BJ (cell line): ENCODE measurements at regions of chr7 and their contacts with region 1.

Region 1: GRCh38 chr7:25894902-25895791 is 256.9 kb upstream of the NFE2L3 start:
- DNase-seq: no peak
- H3K4me3 ChIP-seq: no peak overlapping the region
- H3K27me3 ChIP-seq: peaks cover 6% of the 10 kb centered on the region
- CTCF ChIP-seq: peak; percentile 86

Region 2: DNA sequence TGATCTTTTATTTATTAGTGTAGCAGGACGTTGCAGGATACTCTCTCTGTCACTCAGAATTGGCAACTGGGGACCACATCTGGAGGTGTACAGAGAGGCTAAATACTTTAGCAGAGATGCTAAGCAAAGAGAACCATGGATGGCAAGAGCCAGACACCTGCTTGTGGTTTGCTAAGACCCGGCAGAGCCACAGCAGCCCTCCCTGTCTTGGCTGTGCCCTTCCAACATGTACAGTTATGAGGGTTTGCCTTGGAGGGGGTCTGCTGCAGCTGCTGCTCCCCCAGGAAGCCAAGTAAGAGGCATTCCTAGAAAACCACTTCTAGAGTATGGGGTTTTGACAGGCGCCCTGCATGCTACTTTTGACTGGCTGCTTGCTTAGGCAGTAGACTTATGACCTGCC is 671.9 kb before region 1 on chr7:
- CTCF ChIA-PET with region 1: no interaction called
- POLR2A ChIA-PET with region 1: no interaction called
- DNase-seq: no peak
- H3K4me3 ChIP-seq: no peak overlapping the region
- H3K27me3 ChIP-seq: no peaks in the 10 kb centered on the region; the same call in none of the 2 replicates
- CTCF ChIP-seq: no peak

Region 3: DNA sequence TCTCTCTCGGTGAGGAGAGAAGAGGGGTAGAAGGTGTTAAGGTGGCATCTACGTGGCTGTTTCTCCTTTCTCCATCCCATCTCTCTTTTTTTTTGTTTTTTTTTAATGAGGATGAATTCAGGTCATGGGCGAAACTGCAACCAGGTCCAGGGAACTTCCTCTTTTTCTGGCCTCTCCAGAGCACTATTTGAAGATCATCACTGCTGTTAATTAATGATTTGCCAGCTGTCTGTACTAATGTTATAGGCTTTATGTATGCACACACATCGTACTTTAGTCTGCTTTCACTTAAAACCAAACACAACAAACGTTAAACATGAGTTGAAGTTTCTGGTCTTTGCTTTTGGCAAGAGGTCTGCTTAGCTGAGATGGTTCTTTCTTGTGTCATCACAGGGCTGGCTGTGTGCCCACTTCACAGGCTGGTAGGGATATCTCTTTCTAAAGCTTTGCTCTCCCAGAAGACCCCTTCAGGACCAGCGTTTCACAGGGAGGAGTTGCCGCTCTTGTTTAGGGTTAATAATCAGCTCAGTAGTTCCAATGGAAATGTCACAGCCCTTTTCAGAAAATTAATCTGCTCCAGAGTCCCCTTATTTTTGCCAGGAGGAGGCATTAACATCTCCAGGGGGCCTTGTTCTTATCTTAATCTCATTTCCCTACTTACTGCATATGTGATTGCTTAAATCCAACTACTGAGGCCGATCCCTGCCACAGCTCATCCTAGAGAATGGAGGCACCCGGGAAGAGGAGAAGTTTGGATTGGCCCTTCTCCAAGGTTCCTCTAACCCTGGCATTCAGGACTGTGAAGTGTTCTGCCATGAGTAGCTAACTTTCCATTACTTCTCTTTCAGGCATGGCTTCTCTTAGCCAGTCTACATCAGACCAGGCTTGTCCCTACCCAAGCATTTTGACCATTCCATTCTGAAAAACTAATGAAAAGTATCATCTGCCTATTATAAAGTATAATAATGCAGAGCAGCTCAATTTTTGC is 17.1 kb before region 1 on chr7:
- CTCF ChIA-PET with region 1: interaction called, 13 read pairs
- POLR2A ChIA-PET with region 1: no interaction called
- DNase-seq: no peak
- H3K4me3 ChIP-seq: no peak overlapping the region
- H3K27me3 ChIP-seq: peaks cover 14% of the 10 kb centered on the region
- CTCF ChIP-seq: no peak

Region 4: GRCh38 chr7:25908154-25908949 is 13.2 kb after region 1 on chr7:
- CTCF ChIA-PET with region 1: interaction called, 50 read pairs
- POLR2A ChIA-PET with region 1: no interaction called
- DNase-seq: no peak
- H3K4me3 ChIP-seq: no peak overlapping the region
- H3K27me3 ChIP-seq: no peaks in the 10 kb centered on the region
- CTCF ChIP-seq: no peak

Region 5: DNA sequence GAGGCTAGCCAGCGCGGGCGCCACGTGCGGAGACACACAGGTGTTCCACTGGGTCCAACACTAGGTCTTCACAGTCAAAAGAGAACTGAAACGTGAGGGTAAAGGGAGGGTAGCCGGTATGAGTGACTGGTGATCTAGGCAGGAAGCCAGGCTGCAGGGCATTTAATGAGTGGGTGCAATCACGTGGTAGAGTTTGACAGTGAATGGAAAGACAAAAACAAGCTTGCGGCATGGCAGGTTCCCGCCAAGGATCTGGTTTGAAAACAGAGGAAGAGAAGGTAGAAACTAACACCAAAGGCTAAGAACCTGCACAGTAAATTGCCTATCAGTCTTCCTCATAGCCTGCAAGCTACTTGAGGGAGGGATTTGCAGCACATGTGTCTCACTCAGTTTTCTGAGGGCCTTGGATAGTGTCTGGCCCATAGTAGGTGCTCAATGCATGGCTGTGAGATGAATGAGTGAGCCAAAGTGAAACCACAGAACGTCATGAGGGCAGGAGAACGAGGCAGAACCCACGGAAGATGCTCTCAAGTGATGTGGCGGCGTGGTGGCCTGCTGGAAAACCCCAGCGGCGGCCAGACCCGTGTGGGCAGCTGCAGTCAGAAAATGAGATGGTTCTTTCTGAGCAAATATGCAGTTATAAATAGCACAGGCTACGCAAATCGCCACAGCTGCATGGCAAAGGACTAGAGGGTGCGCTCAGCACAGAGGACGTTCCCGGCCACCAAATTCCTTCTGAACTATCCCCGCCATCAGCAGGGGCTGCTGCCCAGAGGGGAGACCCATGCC is 73.3 kb after region 1 on chr7:
- CTCF ChIA-PET with region 1: no interaction called
- POLR2A ChIA-PET with region 1: no interaction called
- DNase-seq: no peak
- H3K4me3 ChIP-seq: no peak overlapping the region
- H3K27me3 ChIP-seq: no peaks in the 10 kb centered on the region
- CTCF ChIP-seq: no peak

Region 6: GRCh38 chr7:26061688-26062150 is 166.6 kb after region 1 on chr7:
- CTCF ChIA-PET with region 1: interaction called, 23 read pairs
- POLR2A ChIA-PET with region 1: no interaction called
- DNase-seq: no peak
- H3K4me3 ChIP-seq: no peak overlapping the region
- H3K27me3 ChIP-seq: no peaks in the 10 kb centered on the region; the same call in none of the 2 replicates
- CTCF ChIP-seq: peak; percentile 91

Region 7: DNA sequence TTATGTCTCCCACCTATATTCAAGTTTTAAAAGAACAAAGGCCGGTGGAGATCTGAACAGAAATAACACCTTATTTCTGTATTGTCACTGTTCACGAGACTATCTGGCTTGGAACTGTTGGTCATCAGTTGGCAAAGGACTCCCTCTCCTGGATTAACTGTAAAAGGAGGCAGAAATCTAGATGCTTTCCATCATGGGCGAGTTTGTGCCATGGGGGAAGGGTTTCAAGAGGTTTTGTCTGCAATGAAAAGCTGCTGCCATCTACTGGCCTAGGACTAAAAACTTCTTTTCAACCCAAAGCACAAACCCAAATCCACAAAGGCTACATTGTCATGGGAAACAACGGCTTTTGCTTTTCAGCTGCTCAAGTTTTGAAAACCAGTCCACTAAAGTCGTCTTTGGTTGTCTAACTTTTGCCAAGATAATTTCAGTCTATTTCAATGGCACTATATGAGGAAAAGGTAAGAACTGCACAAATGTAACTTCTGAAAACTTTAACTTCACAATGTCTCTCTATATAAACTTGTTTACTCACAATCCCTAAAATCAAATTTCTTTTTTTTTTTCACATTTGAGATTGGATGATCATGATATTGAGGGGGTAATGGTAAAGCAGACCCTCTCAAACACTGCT is 772.5 kb after region 1 on chr7:
- CTCF ChIA-PET with region 1: interaction called, 10 read pairs
- POLR2A ChIA-PET with region 1: no interaction called
- DNase-seq: peak; percentile 66
- H3K4me3 ChIP-seq: no peak overlapping the region
- H3K27me3 ChIP-seq: no peaks in the 10 kb centered on the region
- CTCF ChIP-seq: peak; percentile 86